ENCODE measurements at regions of chr11 and their contacts with region 1.

Region 1: DNA sequence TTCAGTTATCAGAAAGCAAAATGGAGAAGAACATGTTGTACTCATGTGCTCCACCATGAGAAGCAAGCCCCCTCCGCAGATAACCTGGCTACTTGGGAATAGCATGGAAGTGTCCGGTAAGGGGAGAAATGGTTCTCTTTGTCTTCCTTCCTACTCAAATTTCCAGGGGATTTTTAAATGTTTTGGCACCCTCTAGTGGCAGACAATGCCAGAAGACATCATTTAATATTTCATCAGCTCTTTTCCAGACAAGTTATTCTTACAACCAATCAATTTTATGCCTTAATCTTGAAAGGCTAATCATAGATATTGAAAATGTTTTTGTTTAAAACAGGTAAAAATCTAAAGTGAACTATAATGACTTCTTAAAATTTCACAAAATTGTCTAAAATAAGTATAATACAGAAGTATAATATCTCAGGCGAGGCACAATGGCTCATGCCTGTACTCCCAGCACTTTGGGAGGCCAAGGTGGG is 15.7 kb downstream of the CRTAM start:
- DNase-seq: peak; percentile 54
- ATAC-seq: no peak
- H3K4me3 Mint-ChIP-seq: no peak overlapping the region
- H3K27ac Mint-ChIP-seq: no peak overlapping the region
- H3K4me1 Mint-ChIP-seq: peaks cover 46% of the 10 kb centered on the region
- H3K27me3 Mint-ChIP-seq: no peaks in the 10 kb centered on the region

Region 2: DNA sequence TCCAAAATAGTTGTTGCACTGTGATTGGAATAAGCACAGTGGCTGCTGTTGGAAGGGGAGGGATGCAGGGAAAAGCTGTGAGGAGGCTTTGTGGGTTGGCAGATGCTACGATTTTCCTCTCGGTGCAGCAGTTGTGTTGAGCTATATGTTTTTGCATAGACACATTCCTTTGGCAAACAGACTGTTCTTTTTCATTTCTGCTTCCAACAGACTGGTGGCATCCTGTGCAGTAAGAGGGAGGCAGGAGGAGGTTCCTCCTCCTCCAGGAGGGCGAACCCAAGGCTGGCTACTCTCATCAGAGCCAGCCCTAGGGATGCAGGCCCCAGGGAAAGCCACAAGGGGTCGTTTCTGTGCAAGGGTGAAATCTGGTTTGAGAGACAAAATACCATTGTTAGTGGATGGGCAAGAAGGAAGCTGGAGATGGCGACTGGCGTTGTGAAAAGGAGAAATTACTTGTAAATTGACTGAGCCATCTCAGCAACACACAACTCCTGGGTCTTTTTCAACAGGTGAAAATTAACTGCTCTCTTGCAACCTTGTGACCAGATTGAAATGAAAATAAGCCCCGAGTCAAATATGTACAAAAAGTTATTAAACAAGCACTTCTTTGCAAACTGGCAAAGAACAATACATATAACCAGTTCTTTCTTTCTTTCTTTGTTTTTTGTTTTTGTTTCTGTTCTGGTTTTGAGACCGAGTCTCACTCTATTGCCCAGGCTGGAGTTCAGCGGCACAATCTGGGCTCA is 225.0 kb before region 1 on chr11:
- CTCF ChIA-PET with region 1: interaction called, 6 read pairs
- POLR2A ChIA-PET with region 1: no interaction called
- intact Hi-C with region 1: loop called (anchors 1 to 5 kb)
- DNase-seq: peak; percentile 71
- ATAC-seq: peak; percentile 79
- H3K4me3 Mint-ChIP-seq: no peak overlapping the region
- H3K27ac Mint-ChIP-seq: no peak overlapping the region
- H3K4me1 Mint-ChIP-seq: peaks cover 3% of the 10 kb centered on the region
- H3K27me3 Mint-ChIP-seq: peaks cover 2% of the 10 kb centered on the region

Region 3: GRCh38 chr11:122749005-122749687 is 104.9 kb before region 1 on chr11:
- CTCF ChIA-PET with region 1: interaction called, 10 read pairs
- POLR2A ChIA-PET with region 1: no interaction called
- intact Hi-C with region 1: loop called (anchors 1 to 2 kb)
- DNase-seq: peak; percentile 81
- ATAC-seq: peak; percentile 80
- H3K4me3 Mint-ChIP-seq: no peak overlapping the region
- H3K27ac Mint-ChIP-seq: no peak overlapping the region
- H3K4me1 Mint-ChIP-seq: peaks cover 29% of the 10 kb centered on the region
- H3K27me3 Mint-ChIP-seq: peaks cover 6% of the 10 kb centered on the region

Region 4: GRCh38 chr11:122796128-122796717 is 57.8 kb before region 1 on chr11:
- CTCF ChIA-PET with region 1: interaction called, 119 read pairs
- POLR2A ChIA-PET with region 1: no interaction called
- intact Hi-C with region 1: loop called (anchors 1 kb)
- DNase-seq: peak; percentile 84
- ATAC-seq: peak; percentile 91
- H3K4me3 Mint-ChIP-seq: no peak overlapping the region
- H3K27ac Mint-ChIP-seq: no peak overlapping the region
- H3K4me1 Mint-ChIP-seq: peaks cover 2% of the 10 kb centered on the region
- H3K27me3 Mint-ChIP-seq: no peaks in the 10 kb centered on the region

Region 5: GRCh38 chr11:122832721-122833470 is 21.1 kb before region 1 on chr11:
- CTCF ChIA-PET with region 1: interaction called, 14 read pairs
- POLR2A ChIA-PET with region 1: no interaction called
- intact Hi-C with region 1: no loop called
- DNase-seq: no peak
- ATAC-seq: no peak
- H3K4me3 Mint-ChIP-seq: no peak overlapping the region
- H3K27ac Mint-ChIP-seq: no peak overlapping the region
- H3K4me1 Mint-ChIP-seq: peaks cover 8% of the 10 kb centered on the region
- H3K27me3 Mint-ChIP-seq: peaks cover 4% of the 10 kb centered on the region

Region 6: DNA sequence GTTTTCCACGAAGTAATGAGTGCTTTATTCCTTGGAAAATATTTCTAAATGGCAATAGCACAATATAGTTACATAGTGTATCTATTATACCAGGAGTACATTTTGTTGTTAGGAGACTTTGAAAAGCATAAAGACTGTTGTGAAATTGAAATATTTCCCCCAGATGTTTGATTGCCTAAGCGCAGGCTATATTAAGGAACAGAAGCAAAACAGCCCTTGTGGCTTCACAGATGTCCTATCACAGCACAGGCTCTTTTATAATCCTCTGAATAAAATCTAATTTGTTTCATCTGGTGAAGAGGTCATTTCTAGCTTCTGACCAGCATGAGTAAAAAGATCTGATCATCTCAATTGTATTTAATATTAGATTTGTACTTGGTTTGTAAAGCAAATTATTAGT is 79.4 kb after region 1 on chr11:
- CTCF ChIA-PET with region 1: no interaction called
- POLR2A ChIA-PET with region 1: no interaction called
- intact Hi-C with region 1: no loop called
- DNase-seq: no peak
- ATAC-seq: no peak
- H3K4me3 Mint-ChIP-seq: no peak overlapping the region
- H3K27ac Mint-ChIP-seq: no peak overlapping the region
- H3K4me1 Mint-ChIP-seq: no peaks in the 10 kb centered on the region
- H3K27me3 Mint-ChIP-seq: no peaks in the 10 kb centered on the region

Region 7: GRCh38 chr11:123020968-123021367 is 167.0 kb after region 1 on chr11:
- CTCF ChIA-PET with region 1: interaction called, 185 read pairs
- POLR2A ChIA-PET with region 1: no interaction called
- intact Hi-C with region 1: no loop called
- DNase-seq: peak; percentile 58
- ATAC-seq: peak; percentile 91
- H3K4me3 Mint-ChIP-seq: no peak overlapping the region
- H3K27ac Mint-ChIP-seq: no peak overlapping the region
- H3K4me1 Mint-ChIP-seq: peaks cover 2% of the 10 kb centered on the region
- H3K27me3 Mint-ChIP-seq: peaks cover 2% of the 10 kb centered on the region